PC-9 (cell line): ENCODE measurements at regions of chr1 and their contacts with region 1.

Region 1: GRCh38 chr1:16351994-16352841 is at the start of gene FBXO42:
- DNase-seq: peak; percentile 61 to 93
- H3K4me3 ChIP-seq: peak within 1 kb of the TSS; percentile 88
- H3K27ac ChIP-seq: peak within 1 kb of the TSS; percentile 80
- H3K4me1 ChIP-seq: peaks cover 30% of the 10 kb centered on the region
- H3K27me3 ChIP-seq: no peaks in the 10 kb centered on the region
- CTCF ChIP-seq: no peak; the same call in 1 of the 2 replicates
- total RNA-seq, gene FBXO42: 13.0 and 15.3 TPM in 2 replicates

Region 2: GRCh38 chr1:15501208-15502032 is 850.8 kb before region 1 on chr1:
- CTCF ChIA-PET with region 1: no interaction called
- POLR2A ChIA-PET with region 1: no interaction called
- intact Hi-C with region 1: no loop called
- DNase-seq: peak; percentile 39 to 65
- H3K4me3 ChIP-seq: no peak overlapping the region
- H3K27ac ChIP-seq: no peak overlapping the region
- H3K4me1 ChIP-seq: no peaks in the 10 kb centered on the region
- H3K27me3 ChIP-seq: no peaks in the 10 kb centered on the region
- CTCF ChIP-seq: peak; percentile 74

Region 3: GRCh38 chr1:16300436-16300835 is 51.8 kb before region 1 on chr1:
- CTCF ChIA-PET with region 1: interaction called, 17 read pairs
- POLR2A ChIA-PET with region 1: no interaction called
- intact Hi-C with region 1: no loop called
- DNase-seq: no peak
- H3K4me3 ChIP-seq: no peak overlapping the region
- H3K27ac ChIP-seq: no peak overlapping the region
- H3K4me1 ChIP-seq: no peaks in the 10 kb centered on the region
- H3K27me3 ChIP-seq: no peaks in the 10 kb centered on the region
- CTCF ChIP-seq: no peak

Region 4: DNA sequence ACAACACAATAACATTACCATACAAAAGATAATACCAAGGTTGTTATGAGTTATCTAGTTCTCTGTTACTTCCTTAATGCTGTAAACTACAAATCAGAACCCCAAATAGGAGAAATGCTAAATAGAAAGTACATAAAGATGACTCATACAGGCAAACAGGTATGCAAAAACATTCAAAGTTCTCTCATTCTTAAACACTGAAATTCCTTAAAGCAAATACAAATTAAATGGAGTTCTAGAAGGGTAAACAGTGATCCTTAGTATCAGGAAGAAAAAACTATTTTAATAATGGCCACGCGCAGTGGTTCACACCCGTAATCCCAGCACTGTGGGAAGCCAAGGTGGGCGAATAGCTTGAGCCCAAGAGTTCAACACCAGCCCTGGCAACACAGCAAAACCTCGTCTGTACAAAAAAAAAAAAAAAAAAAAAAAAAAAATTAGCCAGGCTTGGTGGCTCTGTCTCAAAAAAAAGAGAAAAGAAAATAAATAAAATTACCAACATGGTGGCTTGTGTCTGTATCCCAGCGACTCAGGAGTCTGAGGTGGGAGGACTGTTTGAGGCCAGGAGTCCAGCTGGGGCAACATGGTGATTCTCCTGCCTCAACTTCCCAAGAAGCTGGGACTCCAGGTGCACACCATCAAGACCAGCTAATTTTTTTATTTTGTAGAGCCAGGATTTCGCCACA is 17.4 kb before region 1 on chr1:
- CTCF ChIA-PET with region 1: interaction called, 11 read pairs
- POLR2A ChIA-PET with region 1: no interaction called
- intact Hi-C with region 1: loop called (anchors 1 kb)
- DNase-seq: peak; percentile 23 to 85
- H3K4me3 ChIP-seq: no peak overlapping the region
- H3K27ac ChIP-seq: peak overlapping the region; percentile 56
- H3K4me1 ChIP-seq: peaks cover 12% of the 10 kb centered on the region; the same call in 1 of the 2 replicates
- H3K27me3 ChIP-seq: no peaks in the 10 kb centered on the region
- CTCF ChIP-seq: no peak

Region 5: DNA sequence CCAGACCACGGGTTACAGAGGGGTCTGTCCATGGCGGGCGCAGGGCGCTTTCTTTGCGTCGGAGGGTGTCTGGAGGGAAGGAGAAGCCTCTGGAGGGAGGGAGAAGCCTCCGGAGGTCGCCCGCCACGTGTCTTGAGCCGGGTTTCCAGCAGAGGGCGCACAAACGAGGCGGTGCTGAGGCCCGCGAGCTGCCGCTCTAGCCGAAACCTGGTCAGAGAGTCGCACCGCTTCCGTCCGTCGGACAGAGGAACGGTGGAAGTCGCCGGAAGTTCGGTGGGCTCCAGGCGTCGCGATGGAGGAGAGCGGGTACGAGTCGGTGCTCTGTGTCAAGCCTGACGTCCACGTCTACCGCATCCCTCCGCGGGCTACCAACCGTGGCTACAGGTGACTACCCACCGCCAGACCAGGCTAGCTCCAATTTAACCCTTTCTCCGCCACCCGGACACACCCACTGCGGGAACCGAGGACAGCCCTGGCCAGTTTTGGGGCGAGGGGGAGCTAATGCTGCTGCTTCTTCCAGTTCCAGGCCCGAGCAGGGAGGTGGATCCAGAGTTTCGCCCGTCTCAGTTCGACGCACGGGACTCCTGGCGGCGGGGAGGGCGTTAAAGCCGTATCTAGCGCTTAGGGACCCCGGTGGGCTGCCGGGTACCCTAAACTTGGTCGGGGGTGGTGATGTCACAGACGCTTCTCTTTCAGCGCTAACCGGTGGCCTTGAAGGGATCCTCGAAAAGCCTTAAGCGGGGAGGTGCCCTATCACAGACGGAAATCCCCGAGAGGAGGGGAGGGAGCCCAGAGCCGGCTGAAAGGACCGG is 88.5 kb after region 1 on chr1 and contains the start of gene NECAP2:
- CTCF ChIA-PET with region 1: interaction called, 3 read pairs
- POLR2A ChIA-PET with region 1: interaction called, 10 read pairs
- intact Hi-C with region 1: no loop called
- DNase-seq: peak; percentile 71 to 93
- H3K4me3 ChIP-seq: peak within 1 kb of the TSS; percentile 74
- H3K27ac ChIP-seq: peak within 1 kb of the TSS; percentile 14; the same call in 1 of the 2 replicates
- H3K4me1 ChIP-seq: peaks cover 5% of the 10 kb centered on the region; the same call in 1 of the 2 replicates
- H3K27me3 ChIP-seq: no peaks in the 10 kb centered on the region
- CTCF ChIP-seq: peak; percentile 71
- total RNA-seq, gene NECAP2: 49.6 and 52.4 TPM in 2 replicates